ENCODE measurements at regions of chr1 and their contacts with region 1.

Region 1: DNA sequence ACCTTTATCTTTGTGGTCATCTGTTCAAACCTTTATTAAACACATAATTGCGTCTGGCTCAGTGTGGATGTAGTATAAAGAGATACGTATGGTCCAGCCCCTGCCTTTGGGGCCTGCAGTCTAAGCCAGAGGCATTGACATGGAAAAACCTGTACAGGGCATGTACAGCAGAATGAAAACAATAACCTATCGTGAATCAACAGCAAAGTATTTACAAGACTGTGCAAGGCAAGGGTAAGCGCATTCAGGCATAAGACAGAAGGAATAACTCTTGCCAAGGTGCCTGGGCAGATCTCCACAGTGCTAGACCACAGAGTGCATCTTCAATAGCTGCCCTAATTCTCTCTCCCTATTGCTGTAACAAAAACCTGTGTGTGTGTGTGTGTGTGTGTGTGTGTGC is 35.5 kb downstream of the KIRREL1 start:
- DNase-seq: peak; percentile 96
- H3K4me3 ChIP-seq: no peak overlapping the region
- H3K27ac ChIP-seq: no peak overlapping the region
- H3K4me1 ChIP-seq: peaks cover 37% of the 10 kb centered on the region
- H3K27me3 ChIP-seq: no peaks in the 10 kb centered on the region
- CTCF ChIP-seq: no peak

Region 2: GRCh38 chr1:157562515-157562914 is 466.5 kb before region 1 on chr1:
- CTCF ChIA-PET with region 1: no interaction called
- dilution Hi-C with region 1: no loop called
- in situ Hi-C with region 1: no loop called
- intact Hi-C with region 1: no loop called
- DNase-seq: no peak
- H3K4me3 ChIP-seq: no peak overlapping the region
- H3K27ac ChIP-seq: no peak overlapping the region
- H3K4me1 ChIP-seq: no peaks in the 10 kb centered on the region
- H3K27me3 ChIP-seq: peaks cover 5% of the 10 kb centered on the region
- CTCF ChIP-seq: no peak

Region 3: GRCh38 chr1:158007667-158008386 is 21.1 kb before region 1 on chr1:
- CTCF ChIA-PET with region 1: no interaction called
- dilution Hi-C with region 1: no loop called
- in situ Hi-C with region 1: no loop called
- intact Hi-C with region 1: loop called (anchors 2 kb)
- DNase-seq: no peak
- H3K4me3 ChIP-seq: no peak overlapping the region
- H3K27ac ChIP-seq: peak overlapping the region; percentile 75
- H3K4me1 ChIP-seq: peaks cover 88% of the 10 kb centered on the region
- H3K27me3 ChIP-seq: no peaks in the 10 kb centered on the region
- CTCF ChIP-seq: no peak

Measured in mammary epithelial cell (primary cell).